ENCODE measurements at regions of chr12 and their contacts with region 1.

Region 1: GRCh38 chr12:110742718-110743570 is at the start of gene PPP1CC:
- DNase-seq: peak; percentile 88
- H3K4me3 Mint-ChIP-seq: peak within 1 kb of the TSS; percentile 100
- H3K27ac Mint-ChIP-seq: peak within 1 kb of the TSS; percentile 99
- H3K4me1 Mint-ChIP-seq: peaks cover 45% of the 10 kb centered on the region
- H3K27me3 Mint-ChIP-seq: no peaks in the 10 kb centered on the region
- total RNA-seq, gene PPP1CC: 449 and 469 TPM in 2 replicates

Region 2: DNA sequence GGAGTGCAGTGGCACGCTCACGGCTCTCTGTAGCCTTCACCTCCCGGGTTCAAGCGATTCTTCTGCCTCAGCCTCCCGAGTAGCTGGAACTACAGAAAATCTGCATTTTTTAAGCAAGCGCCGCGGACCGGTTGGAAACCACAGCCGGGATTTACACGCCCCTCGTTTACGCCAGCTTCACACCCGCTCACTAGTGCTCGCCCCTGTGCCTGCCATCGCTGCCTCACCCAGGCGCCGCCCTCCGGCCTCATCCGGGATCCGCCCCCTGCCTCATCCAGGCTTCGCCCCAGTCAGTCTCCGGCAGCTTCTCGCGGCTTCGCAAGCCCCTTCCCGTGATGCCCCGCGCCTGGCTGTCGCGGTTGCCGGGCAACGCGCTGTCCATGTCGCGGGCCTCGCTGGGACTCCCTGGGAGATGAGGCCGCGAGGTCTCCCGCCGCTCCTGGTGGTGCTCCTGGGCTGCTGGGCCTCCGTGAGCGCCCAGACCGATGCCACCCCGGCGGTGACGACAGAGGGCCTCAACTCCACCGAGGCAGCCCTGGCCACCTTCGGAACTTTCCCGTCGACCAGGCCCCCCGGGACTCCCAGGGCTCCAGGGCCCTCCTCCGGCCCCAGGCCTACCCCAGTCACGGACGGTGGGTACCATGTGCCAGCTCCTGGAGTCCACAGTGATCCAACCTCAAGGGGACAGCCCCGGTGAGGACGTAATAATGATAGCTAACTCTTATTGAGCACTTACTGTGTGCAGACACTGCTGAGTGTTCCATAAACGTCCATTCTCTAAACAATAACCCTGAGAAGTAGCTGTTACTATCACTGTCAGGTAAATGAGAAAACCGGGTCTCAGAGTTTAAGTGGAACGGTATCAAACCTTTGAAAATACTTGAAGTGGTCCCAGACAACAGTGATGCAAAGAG is 128.9 kb before region 1 on chr12 and contains the start of gene TCTN1:
- intact Hi-C with region 1: loop called (anchors 1 kb)
- DNase-seq: peak; percentile 98
- H3K4me3 Mint-ChIP-seq: peak within 1 kb of the TSS; percentile 83
- H3K27ac Mint-ChIP-seq: peak within 1 kb of the TSS; percentile 81
- H3K4me1 Mint-ChIP-seq: peaks cover 8% of the 10 kb centered on the region
- H3K27me3 Mint-ChIP-seq: peaks cover 4% of the 10 kb centered on the region
- total RNA-seq, gene TCTN1: 7.6 and 8.8 TPM in 2 replicates

Region 3: GRCh38 chr12:110689281-110690126 is 53.4 kb before region 1 on chr12:
- intact Hi-C with region 1: loop called (anchors 1 kb)
- DNase-seq: peak; percentile 51
- H3K4me3 Mint-ChIP-seq: peak overlapping the region; percentile 89
- H3K27ac Mint-ChIP-seq: peak overlapping the region; percentile 89
- H3K4me1 Mint-ChIP-seq: peaks cover 52% of the 10 kb centered on the region
- H3K27me3 Mint-ChIP-seq: peaks cover 7% of the 10 kb centered on the region

Region 4: DNA sequence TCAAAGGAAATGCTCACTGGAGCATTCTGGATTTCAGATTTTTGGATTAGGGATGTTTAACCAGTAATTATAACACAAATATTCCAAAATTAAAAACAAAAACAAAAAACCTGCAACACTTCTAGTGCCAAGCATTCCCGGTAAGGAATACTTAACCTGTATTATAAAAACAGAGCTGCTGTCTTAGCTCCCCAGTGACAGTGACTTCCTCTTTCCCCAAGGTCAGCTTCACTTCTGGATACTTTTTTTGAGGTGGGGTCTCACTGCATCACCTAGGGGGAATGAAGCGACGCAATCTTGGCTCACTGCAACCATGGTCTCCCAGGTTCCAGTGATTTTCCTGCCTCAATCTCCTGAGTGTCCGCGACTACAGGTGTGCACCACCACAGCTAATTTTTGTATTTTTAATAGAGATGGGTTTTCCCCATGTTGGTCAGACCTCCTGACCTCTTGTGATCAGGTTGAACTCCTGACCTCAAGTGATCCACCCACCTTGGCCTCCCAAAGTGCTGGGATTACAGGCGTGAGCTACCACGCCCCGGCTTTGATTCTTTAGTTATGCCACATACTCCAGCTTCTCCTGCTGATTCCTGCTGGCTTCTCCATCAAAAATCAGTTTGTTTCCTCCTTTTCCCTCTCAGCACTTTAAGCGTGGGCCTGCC is 16.1 kb before region 1 on chr12:
- intact Hi-C with region 1: loop called (anchors 1 kb)
- DNase-seq: no peak
- H3K4me3 Mint-ChIP-seq: no peak overlapping the region
- H3K27ac Mint-ChIP-seq: peak overlapping the region; percentile 25
- H3K4me1 Mint-ChIP-seq: peaks cover 62% of the 10 kb centered on the region
- H3K27me3 Mint-ChIP-seq: no peaks in the 10 kb centered on the region

Region 5: GRCh38 chr12:110776410-110776809 is 33.5 kb after region 1 on chr12:
- intact Hi-C with region 1: loop called (anchors 1 kb)
- DNase-seq: peak; percentile 43
- H3K4me3 Mint-ChIP-seq: peak overlapping the region; percentile 40
- H3K27ac Mint-ChIP-seq: peak overlapping the region; percentile 99
- H3K4me1 Mint-ChIP-seq: peaks cover 72% of the 10 kb centered on the region
- H3K27me3 Mint-ChIP-seq: no peaks in the 10 kb centered on the region

Region 6: GRCh38 chr12:110888256-110888991 is 145.5 kb after region 1 on chr12:
- intact Hi-C with region 1: loop called (anchors 2 kb)
- DNase-seq: no peak
- H3K4me3 Mint-ChIP-seq: no peak overlapping the region
- H3K27ac Mint-ChIP-seq: no peak overlapping the region
- H3K4me1 Mint-ChIP-seq: peaks cover 5% of the 10 kb centered on the region
- H3K27me3 Mint-ChIP-seq: peaks cover 6% of the 10 kb centered on the region